Naive thymus-derived CD4-positive, alpha-beta T cell (primary cell): ENCODE measurements at regions of chr1 and their contacts with region 1.

Region 1: DNA sequence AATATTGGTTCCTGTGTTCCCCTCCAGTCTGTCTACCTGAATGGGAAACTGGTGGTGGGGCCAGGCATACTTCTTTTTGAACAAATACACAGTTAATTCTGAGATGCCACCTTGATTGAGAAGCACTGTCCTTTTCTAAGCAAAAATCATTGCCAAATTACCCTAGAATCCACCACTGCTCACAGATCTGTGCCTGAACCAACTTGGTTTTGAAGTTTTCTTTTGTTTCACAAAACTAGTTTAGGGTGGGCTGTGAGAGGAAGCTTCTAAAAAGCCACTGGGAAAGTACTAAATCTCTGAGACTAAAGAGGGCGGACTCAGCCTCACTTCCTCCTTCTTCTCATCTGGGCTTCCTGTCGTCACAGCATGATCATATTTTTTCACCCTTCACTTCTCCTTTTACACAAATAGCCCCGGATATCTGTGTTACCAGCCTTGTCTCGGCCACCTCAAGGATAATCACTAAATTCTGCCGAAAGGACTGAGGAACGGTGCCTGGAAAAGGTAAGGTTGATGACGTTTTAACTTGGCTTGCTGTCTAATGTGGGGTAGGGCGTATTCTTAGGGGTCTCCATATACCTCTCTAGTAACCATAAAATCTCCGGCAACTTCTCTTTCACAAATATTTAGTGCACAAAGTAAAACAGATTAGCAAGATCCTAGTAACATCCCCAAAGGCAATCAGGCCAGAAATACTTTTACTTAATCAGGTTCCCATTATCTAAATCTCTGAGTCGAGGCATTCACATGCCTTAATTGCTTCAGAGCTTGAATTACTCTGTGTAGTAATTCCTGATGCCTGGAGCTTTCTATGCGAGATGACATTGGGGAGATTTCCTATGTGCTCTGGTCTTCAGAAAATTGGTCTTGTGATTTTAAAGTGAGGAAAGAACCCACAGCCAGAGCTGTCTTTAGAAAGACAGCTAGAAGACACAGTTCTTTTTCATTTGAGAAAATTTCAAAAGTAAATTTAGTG is at the start of gene CD53:
- DNase-seq: peak in 8 of 9 donors; percentile 19 to 82 (median 76)
- ATAC-seq: peak; percentile 86
- H3K4me3 ChIP-seq: peak within 1 kb of the TSS; percentile 84
- H3K4me3 Mint-ChIP-seq: peak within 1 kb of the TSS; percentile 94 to 100 (median 96)
- H3K27ac ChIP-seq: peak within 1 kb of the TSS; percentile 91
- H3K27ac Mint-ChIP-seq: peak within 1 kb of the TSS; percentile 95 to 99 (median 98)
- H3K4me1 ChIP-seq: peaks cover 24 to 48% of the 10 kb centered on the region in 2 donors
- H3K4me1 Mint-ChIP-seq: peaks cover 34 to 72% (median 52%) of the 10 kb centered on the region in 7 donors
- H3K27me3 ChIP-seq: no peaks in the 10 kb centered on the region
- H3K27me3 Mint-ChIP-seq: no peaks in the 10 kb centered on the region
- total RNA-seq, gene CD53: 237 to 513 (median 287) TPM

Region 2: DNA sequence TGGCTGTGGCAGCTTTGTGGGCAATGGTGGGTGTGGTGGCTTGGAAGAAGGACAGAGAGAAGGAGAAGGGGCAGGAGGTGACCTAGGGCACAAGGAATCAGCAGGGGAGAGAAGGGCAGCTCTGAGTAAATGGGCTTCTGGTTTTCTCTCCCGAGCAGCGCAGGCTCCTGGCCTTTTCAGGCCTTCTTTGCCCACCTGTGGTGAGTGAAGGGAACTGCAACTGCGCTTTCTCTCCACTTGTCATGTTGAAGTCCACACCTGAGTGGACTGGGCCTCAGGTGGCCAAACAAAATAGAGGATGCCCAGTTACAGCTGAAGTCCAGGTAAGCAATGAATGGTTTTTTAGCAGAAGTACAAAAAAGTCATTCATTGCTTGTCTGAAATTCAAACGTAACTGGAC is 324.7 kb before region 1 on chr1:
- CTCF ChIA-PET with region 1: no interaction called
- POLR2A ChIA-PET with region 1: no interaction called
- intact Hi-C with region 1: no loop called
- DNase-seq: no peak
- ATAC-seq: no peak
- H3K4me3 ChIP-seq: no peak overlapping the region
- H3K4me3 Mint-ChIP-seq: no peak overlapping the region
- H3K27ac ChIP-seq: no peak overlapping the region
- H3K27ac Mint-ChIP-seq: no peak overlapping the region
- H3K4me1 ChIP-seq: no peaks in the 10 kb centered on the region
- H3K4me1 Mint-ChIP-seq: no peaks in the 10 kb centered on the region
- H3K27me3 ChIP-seq: no peaks in the 10 kb centered on the region
- H3K27me3 Mint-ChIP-seq: peaks cover 20 to 50% (median 39%) of the 10 kb centered on the region in 5 donors

Region 3: GRCh38 chr1:110594456-110595352 is 278.3 kb before region 1 on chr1:
- CTCF ChIA-PET with region 1: no interaction called
- POLR2A ChIA-PET with region 1: no interaction called
- intact Hi-C with region 1: no loop called
- DNase-seq: no peak
- ATAC-seq: no peak
- H3K4me3 ChIP-seq: no peak overlapping the region
- H3K4me3 Mint-ChIP-seq: no peak overlapping the region
- H3K27ac ChIP-seq: no peak overlapping the region
- H3K27ac Mint-ChIP-seq: peak overlapping the region in 1 of 9 donors; percentile 8
- H3K4me1 ChIP-seq: no peaks in the 10 kb centered on the region
- H3K4me1 Mint-ChIP-seq: peaks cover 0 to 15% (median 0%) of the 10 kb centered on the region in 7 donors
- H3K27me3 ChIP-seq: no peaks in the 10 kb centered on the region
- H3K27me3 Mint-ChIP-seq: peaks cover 0 to 15% (median 0%) of the 10 kb centered on the region in 5 donors

Region 4: DNA sequence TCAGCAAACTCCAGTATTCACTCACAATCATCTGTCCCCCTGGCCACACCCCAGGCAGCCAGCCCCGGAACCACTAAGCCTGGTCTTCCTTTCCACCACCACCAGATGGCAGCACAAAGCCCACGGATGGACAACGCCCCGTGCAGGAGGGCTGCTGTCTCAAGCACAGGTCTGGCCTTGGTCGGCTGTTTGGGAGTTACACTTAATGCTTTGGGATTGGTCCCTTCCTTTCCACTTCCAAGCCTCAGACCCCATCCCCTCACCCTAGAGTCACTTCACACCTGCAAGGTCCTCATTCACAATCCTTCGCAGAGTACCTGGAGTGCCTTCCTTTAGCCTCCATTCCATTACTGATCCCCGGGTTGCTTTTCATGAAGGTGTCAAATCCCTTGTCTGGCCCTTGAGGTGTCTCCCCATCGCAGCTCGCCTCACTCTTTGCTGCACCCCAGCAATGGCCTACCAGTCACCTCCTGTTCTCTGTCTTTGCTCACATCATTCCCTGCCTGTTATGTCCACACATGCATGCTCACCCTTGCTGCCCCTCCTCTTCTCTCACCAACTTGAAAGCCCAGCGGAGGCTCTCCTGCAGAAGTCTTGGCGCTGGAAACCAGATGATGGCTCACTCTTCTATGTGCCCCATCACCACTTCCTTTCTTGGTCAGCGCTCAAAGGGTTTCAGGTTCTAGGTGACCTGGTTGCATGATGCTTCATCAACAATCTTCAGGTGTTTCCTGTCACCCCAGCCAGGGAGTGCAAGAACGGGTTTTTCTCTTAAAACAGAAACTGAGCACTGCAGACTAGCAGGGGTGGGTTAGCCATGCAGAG is 242.0 kb before region 1 on chr1:
- CTCF ChIA-PET with region 1: no interaction called
- POLR2A ChIA-PET with region 1: interaction called, 5 read pairs
- intact Hi-C with region 1: loop called in 1 of 2 experiments (anchors 2 kb)
- DNase-seq: peak; percentile 74 to 87 (median 84)
- ATAC-seq: peak; percentile 87
- H3K4me3 ChIP-seq: peak overlapping the region; percentile 50
- H3K4me3 Mint-ChIP-seq: no peak overlapping the region
- H3K27ac ChIP-seq: peak overlapping the region; percentile 57
- H3K27ac Mint-ChIP-seq: no peak overlapping the region
- H3K4me1 ChIP-seq: peaks cover 58 to 59% of the 10 kb centered on the region in 2 donors
- H3K4me1 Mint-ChIP-seq: peaks cover 38 to 62% (median 52%) of the 10 kb centered on the region in 7 donors
- H3K27me3 ChIP-seq: no peaks in the 10 kb centered on the region
- H3K27me3 Mint-ChIP-seq: no peaks in the 10 kb centered on the region

Region 5: DNA sequence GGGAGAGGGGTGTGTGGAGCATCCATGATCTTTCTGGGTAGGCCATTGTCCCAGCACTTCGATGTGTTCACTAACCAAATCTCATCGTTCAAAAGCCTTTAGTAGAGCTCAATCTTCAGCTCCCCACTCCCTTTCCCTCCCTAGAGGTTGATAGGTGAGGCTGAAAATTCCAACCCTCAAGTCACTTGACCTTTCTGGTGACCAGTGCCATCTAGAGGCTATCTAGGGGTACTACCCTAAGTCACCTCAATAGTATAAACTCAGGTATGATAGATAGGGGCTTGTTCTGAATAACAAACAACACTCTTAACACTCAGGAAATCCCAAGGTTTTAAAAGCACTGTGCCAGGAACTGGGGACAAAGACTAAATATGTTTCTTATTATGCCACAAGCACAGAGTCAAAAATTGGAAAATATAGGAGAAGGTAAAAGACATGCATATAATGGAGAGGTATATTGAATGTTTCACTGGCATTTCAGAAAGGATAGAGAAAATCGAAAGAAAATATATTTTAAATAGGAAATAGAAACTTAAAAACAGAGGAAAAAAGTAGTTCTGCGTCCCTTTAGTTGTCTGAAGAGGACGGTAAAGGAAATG is 43.0 kb before region 1 on chr1:
- CTCF ChIA-PET with region 1: interaction called, 3 read pairs
- POLR2A ChIA-PET with region 1: interaction called, 3 read pairs
- intact Hi-C with region 1: loop called (anchors 1 to 5 kb)
- DNase-seq: peak in 7 of 9 donors; percentile 20 to 61 (median 54)
- ATAC-seq: peak; percentile 93
- H3K4me3 ChIP-seq: no peak overlapping the region
- H3K4me3 Mint-ChIP-seq: no peak overlapping the region
- H3K27ac ChIP-seq: no peak overlapping the region
- H3K27ac Mint-ChIP-seq: peak overlapping the region in 1 of 9 donors; percentile 14
- H3K4me1 ChIP-seq: no peaks in the 10 kb centered on the region
- H3K4me1 Mint-ChIP-seq: peaks cover 6 to 33% (median 13%) of the 10 kb centered on the region in 7 donors
- H3K27me3 ChIP-seq: no peaks in the 10 kb centered on the region
- H3K27me3 Mint-ChIP-seq: peaks cover 0 to 49% (median 2%) of the 10 kb centered on the region in 5 donors

Region 6: GRCh38 chr1:110896090-110896489 is 23.1 kb after region 1 on chr1:
- CTCF ChIA-PET with region 1: interaction called, 3 read pairs
- POLR2A ChIA-PET with region 1: interaction called, 6 read pairs
- intact Hi-C with region 1: loop called (anchors 1 to 2 kb)
- DNase-seq: peak in 6 of 9 donors; percentile 43 to 60 (median 54)
- ATAC-seq: peak; percentile 58
- H3K4me3 ChIP-seq: no peak overlapping the region
- H3K4me3 Mint-ChIP-seq: peak overlapping the region; percentile 38 to 95 (median 66)
- H3K27ac ChIP-seq: peak overlapping the region; percentile 52
- H3K27ac Mint-ChIP-seq: peak overlapping the region; percentile 88 to 98 (median 93)
- H3K4me1 ChIP-seq: peaks cover 62 to 76% of the 10 kb centered on the region in 2 donors
- H3K4me1 Mint-ChIP-seq: peaks cover 59 to 89% (median 84%) of the 10 kb centered on the region in 7 donors
- H3K27me3 ChIP-seq: no peaks in the 10 kb centered on the region
- H3K27me3 Mint-ChIP-seq: no peaks in the 10 kb centered on the region

Region 7: DNA sequence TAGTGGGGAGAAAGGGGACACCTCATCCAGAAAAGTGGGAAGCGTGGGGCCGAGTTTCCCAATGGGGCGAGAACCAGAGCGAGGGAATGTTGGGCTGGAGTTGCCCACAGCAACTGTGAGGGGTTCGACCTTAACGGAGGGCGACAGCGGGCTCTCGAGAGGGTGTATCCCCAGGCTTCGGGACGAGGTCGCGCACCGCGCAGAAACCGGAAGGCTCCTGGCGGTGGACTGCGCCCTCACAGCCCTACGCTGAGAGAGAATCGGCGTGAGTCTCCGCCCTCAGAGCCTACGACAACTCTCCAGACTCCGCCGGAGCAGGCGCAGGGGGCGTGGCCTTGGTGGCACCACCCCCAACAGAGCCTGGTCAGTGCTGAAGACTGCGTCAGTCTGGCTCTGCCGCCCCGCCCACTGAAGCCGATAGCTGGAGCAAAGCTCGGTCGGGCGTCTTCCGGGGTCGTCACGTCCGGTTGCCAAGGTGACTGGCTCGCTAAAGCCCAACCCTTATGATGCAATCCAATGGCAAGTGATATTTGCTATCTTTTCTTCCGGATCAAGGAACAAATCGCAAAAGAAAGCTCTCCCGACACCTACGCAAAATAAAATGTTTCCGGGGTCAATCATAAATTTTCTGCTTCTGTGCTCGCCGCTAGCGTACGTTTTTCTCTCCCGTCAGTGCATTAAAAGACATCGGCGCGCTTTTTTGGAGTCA is 90.8 kb after region 1 on chr1 and contains the start of gene LRIF1:
- CTCF ChIA-PET with region 1: interaction called, 4 read pairs
- POLR2A ChIA-PET with region 1: interaction called, 36 read pairs
- intact Hi-C with region 1: loop called (anchors 1 kb)
- DNase-seq: peak; percentile 96 to 100 (median 100)
- ATAC-seq: peak; percentile 98
- H3K4me3 ChIP-seq: peak within 1 kb of the TSS; percentile 90
- H3K4me3 Mint-ChIP-seq: peak within 1 kb of the TSS; percentile 81 to 98 (median 93)
- H3K27ac ChIP-seq: peak within 1 kb of the TSS; percentile 89
- H3K27ac Mint-ChIP-seq: peak within 1 kb of the TSS; percentile 89 to 99 (median 97)
- H3K4me1 ChIP-seq: peaks cover 25% of the 10 kb centered on the region in 2 donors
- H3K4me1 Mint-ChIP-seq: peaks cover 29 to 50% (median 35%) of the 10 kb centered on the region in 7 donors
- H3K27me3 ChIP-seq: peaks cover 0 to under 1% of the 10 kb centered on the region in 2 donors
- H3K27me3 Mint-ChIP-seq: peaks cover 12 to 19% (median 15%) of the 10 kb centered on the region in 5 donors
- total RNA-seq, gene LRIF1: 7.9 to 25.8 (median 17.3) TPM

Region 8: DNA sequence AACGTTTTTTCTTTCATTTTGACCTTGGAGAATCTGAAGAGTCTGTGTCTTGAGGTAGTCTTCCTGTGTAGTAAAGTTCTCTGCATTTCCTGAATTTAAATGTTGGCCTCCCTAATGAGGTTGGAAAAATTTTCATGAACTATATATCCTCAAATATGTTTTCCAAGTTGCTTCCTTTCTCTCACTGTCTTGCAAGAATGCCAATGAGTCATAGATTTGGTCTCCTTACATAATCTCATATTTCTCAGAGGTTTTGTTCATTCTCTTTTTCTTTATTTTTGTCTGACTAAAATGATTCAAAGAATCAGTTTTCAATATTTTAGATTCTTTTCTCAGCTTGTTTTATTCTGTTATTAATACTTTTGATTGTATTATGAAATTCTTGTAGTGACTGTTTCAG is 179.2 kb after region 1 on chr1:
- CTCF ChIA-PET with region 1: no interaction called
- POLR2A ChIA-PET with region 1: no interaction called
- intact Hi-C with region 1: no loop called
- DNase-seq: no peak
- ATAC-seq: no peak
- H3K4me3 ChIP-seq: no peak overlapping the region
- H3K4me3 Mint-ChIP-seq: no peak overlapping the region
- H3K27ac ChIP-seq: no peak overlapping the region
- H3K27ac Mint-ChIP-seq: no peak overlapping the region
- H3K4me1 ChIP-seq: no peaks in the 10 kb centered on the region
- H3K4me1 Mint-ChIP-seq: peaks cover 0 to 3% (median 0%) of the 10 kb centered on the region in 7 donors
- H3K27me3 ChIP-seq: no peaks in the 10 kb centered on the region
- H3K27me3 Mint-ChIP-seq: peaks cover 4 to 67% (median 28%) of the 10 kb centered on the region in 5 donors